ENCODE measurements at regions of chr1 and their contacts with region 1.

Region 1: DNA sequence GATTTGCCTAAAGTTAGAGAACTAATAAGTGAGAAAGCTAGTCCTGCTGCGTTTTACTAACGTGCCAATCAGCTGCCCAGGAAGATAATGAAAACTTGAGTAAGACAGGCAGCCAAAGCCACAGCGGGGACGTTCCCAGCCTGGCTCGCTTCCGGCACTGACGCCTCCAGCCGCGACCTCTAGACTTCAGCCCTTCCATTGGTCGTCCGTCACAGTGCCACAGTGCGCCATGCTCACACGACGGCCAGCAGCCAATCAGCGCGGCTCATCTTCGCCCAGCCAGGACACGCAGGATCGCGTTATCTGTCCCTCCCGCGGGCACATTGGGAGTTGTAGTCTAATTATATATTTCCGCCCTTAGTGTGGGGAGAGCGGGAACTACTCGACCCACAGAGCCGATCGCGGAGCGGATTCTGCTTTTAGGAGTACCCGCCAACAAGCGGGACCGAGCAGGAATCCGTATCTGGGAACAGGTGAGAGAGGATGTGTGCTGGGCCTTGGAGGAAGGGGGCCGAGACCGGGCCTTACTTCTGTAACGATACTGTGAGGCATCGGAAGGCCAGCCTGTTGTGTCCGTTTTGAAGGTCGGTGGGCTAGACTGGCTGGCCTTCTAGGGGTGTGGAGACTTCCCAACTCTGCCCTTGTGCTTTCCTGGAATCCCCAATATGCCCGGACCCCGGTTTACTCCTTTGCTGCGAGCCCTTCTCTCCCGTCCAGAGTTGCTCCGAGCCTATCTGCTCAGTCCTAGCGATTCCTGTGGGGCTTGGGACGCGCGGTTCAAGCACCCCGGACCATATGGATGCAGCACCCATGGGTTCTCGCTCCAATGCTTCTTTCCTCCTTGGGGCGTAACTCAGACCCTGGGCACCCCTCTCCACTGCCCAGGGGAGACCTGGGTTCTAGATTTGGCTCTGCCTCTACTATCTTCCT is at the start of gene FDPS:
- DNase-seq: peak; percentile 99
- ATAC-seq: peak; percentile 99
- H3K4me3 Mint-ChIP-seq: peak within 1 kb of the TSS; percentile 88
- H3K27ac Mint-ChIP-seq: peak within 1 kb of the TSS; percentile 98
- H3K4me1 Mint-ChIP-seq: peaks cover 34% of the 10 kb centered on the region
- H3K27me3 Mint-ChIP-seq: no peaks in the 10 kb centered on the region
- total RNA-seq, gene FDPS: 255 to 354 TPM

Region 2: DNA sequence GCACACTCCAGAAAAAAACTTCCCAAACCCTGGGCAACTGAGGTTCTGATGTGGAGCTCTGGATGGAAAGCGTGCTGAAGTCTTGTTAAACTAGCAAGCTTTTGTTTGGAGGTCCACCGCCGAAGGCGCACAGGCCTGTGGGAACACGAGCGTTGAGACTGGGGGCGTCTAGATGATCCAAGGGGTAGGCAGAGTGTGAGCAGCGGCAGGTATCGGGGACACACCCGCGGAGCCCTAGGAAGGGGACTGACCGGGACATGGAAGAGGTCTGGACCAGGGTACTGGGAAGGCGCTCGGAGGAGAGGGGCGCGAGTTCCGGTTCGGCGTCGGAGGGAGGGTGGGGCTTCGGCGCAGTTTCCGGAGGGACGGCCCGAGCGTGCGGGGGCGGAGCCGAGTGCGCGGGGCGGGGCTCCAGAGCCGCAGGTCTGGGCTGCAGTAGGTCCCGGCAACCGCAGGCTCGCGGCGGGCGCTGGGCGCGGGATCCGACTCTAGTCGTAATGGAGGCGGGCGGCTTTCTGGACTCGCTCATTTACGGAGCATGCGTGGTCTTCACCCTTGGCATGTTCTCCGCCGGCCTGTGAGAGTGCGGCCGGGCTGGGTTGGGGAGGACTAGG is 173.2 kb before region 1 on chr1 and contains the start of gene SLC50A1:
- CTCF ChIA-PET with region 1: no interaction called
- POLR2A ChIA-PET with region 1: no interaction called
- intact Hi-C with region 1: loop called in 1 of 2 experiments (anchors 1 kb)
- DNase-seq: peak; percentile 97
- ATAC-seq: peak; percentile 78
- H3K4me3 Mint-ChIP-seq: peak within 1 kb of the TSS; percentile 96
- H3K27ac Mint-ChIP-seq: peak within 1 kb of the TSS; percentile 97
- H3K4me1 Mint-ChIP-seq: peaks cover 35% of the 10 kb centered on the region
- H3K27me3 Mint-ChIP-seq: no peaks in the 10 kb centered on the region
- total RNA-seq, gene SLC50A1: 50.2 to 58.0 TPM

Region 3: DNA sequence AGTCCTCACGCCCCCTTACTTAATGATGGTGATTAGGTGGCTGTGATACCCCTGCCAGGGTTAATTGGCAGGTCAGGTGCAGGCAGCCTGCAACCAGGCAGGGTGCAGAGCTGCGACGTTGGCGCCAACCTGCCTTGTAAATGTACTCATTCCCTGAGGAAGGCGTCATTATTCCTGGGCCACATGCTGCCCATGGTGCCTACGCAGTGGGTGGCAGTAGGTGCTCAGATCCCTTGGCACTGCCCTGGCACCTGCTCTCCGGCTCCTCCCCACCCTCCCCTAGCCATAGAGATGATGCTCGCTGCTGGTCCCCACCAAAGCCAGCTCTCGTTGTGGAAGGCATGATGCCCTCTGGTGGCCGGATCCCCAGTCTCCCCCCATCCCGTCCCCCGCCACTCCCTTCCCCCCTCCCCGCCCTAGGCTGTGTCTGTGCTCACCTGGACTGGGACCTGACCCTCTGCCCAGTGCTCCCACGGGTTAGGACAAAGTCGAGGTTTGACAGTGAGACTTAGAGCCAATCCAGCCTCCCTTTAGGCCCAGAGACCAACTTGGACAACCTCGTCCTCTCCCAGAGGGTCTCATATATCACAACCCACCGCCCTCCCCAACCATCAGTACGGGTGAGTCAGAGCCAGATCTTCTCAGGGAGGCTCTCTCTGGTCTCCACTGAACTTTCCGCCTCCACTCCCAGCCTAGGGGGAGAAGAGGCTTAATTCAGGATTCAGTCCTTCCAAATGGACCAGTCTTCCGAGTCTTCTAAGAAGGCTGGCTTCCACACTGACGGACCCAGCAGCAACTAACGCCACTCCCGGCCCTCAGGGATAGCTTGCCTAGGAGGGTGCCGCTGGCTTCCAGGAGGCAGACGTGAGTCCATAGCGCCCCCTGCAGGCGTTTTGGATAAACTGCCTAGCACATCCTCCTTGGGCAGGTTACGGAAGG is 141.3 kb before region 1 on chr1:
- CTCF ChIA-PET with region 1: no interaction called
- POLR2A ChIA-PET with region 1: no interaction called
- intact Hi-C with region 1: no loop called
- DNase-seq: peak; percentile 95
- ATAC-seq: peak; percentile 88
- H3K4me3 Mint-ChIP-seq: peak overlapping the region; percentile 21
- H3K27ac Mint-ChIP-seq: peak overlapping the region; percentile 1
- H3K4me1 Mint-ChIP-seq: peaks cover 26% of the 10 kb centered on the region
- H3K27me3 Mint-ChIP-seq: no peaks in the 10 kb centered on the region

Region 4: DNA sequence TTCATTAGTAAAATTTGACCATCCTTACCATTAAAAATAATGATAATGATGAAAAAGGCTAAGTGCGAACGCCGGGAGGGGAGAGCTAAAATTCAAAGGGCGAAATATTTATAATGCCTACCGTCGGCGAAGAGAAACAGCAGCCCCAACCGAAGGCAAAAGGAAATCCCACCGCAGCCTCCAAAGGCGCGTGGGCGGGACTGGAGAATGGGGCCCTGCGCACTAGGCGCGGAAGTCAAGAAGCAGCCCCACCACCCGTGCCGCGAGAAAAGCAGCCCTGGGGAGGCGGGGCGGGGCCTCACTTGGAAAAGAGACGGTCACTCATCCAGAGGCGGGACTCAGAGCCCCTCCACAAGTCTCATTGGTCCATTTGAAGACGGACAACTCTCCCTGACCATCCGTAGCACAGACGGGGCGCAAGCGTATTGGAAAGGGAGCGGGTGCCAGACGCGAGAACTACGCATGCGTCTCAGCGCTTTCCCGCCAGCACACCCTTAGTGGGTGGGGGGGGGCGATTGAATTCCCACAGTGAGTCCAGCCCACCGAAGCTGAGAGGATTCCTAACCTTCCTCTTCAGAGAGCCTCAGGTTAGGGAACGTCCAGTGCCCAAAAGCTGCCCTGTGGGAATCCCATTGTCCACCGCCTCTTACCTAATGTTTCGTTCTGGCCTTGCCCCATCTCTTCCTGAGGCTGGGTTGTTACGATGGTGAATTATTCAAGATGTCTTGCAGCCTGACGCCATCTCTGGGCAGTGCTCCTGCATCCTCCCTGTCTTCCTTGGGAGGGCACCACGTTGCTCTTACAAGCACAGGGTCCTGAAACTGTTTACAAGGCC is 81.3 kb before region 1 on chr1:
- CTCF ChIA-PET with region 1: interaction called, 4 read pairs
- POLR2A ChIA-PET with region 1: no interaction called
- intact Hi-C with region 1: loop called in 1 of 2 experiments (anchors 1 kb)
- DNase-seq: peak; percentile 99
- ATAC-seq: peak; percentile 98
- H3K4me3 Mint-ChIP-seq: peak overlapping the region; percentile 96
- H3K27ac Mint-ChIP-seq: peak overlapping the region; percentile 97
- H3K4me1 Mint-ChIP-seq: peaks cover 27% of the 10 kb centered on the region
- H3K27me3 Mint-ChIP-seq: no peaks in the 10 kb centered on the region

Region 5: DNA sequence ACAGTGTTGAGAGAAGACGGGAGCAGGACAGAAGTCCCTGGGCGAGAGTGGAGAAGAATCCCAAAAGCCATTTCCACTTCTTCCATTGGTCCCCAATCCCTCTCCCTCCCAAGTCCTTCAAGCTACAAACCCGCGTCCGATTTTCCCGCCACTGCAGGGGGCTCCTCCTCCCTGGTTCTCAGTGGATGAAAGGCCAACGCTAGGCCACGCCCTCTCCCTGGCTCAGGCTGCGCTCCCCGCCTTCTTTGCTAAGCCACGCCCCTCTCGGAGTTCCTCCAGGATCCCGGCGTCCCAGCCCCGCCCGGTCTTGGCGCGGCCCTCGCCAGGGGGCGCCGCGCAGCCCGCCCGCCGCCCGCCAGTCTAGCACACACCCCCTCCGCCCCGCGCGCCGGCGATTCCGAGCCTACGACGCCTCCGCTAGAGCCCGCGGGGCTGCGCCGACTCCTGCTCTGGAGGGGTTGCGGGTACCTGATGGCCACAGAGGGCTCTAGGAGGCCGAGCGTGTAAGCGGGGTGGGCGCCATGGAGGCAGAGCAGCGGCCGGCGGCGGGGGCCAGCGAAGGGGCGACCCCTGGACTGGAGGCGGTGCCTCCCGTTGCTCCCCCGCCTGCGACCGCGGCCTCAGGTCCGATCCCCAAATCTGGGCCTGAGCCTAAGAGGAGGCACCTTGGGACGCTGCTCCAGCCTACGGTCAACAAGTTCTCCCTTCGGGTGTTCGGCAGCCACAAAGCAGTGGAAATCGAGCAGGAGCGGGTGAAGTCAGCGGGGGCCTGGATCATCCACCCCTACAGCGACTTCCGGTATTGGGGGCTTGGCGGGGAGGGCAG is 31.5 kb before region 1 on chr1 and contains the start of gene HCN3:
- CTCF ChIA-PET with region 1: interaction called, 8 read pairs
- POLR2A ChIA-PET with region 1: interaction called, 7 read pairs
- intact Hi-C with region 1: loop called (anchors 1 to 2 kb)
- DNase-seq: peak; percentile 97
- ATAC-seq: peak; percentile 68
- H3K4me3 Mint-ChIP-seq: peak within 1 kb of the TSS; percentile 63
- H3K27ac Mint-ChIP-seq: no peak within 1 kb of the TSS
- H3K4me1 Mint-ChIP-seq: peaks cover 31% of the 10 kb centered on the region
- H3K27me3 Mint-ChIP-seq: no peaks in the 10 kb centered on the region
- total RNA-seq, gene HCN3: 1.9 to 2.3 TPM

Region 6: GRCh38 chr1:155342842-155343241 is 34.1 kb after region 1 on chr1:
- CTCF ChIA-PET with region 1: no interaction called
- POLR2A ChIA-PET with region 1: no interaction called
- intact Hi-C with region 1: no loop called
- DNase-seq: no peak
- ATAC-seq: no peak
- H3K4me3 Mint-ChIP-seq: no peak overlapping the region
- H3K27ac Mint-ChIP-seq: no peak overlapping the region
- H3K4me1 Mint-ChIP-seq: peaks cover 4% of the 10 kb centered on the region
- H3K27me3 Mint-ChIP-seq: no peaks in the 10 kb centered on the region

Region 7: GRCh38 chr1:155688324-155689080 is 379.7 kb after region 1 on chr1 and contains the start of gene YY1AP1:
- CTCF ChIA-PET with region 1: no interaction called
- POLR2A ChIA-PET with region 1: no interaction called
- intact Hi-C with region 1: loop called in 1 of 2 experiments (anchors 5 kb)
- DNase-seq: peak; percentile 95
- ATAC-seq: peak; percentile 86
- H3K4me3 Mint-ChIP-seq: peak within 1 kb of the TSS; percentile 97
- H3K27ac Mint-ChIP-seq: peak within 1 kb of the TSS; percentile 94
- H3K4me1 Mint-ChIP-seq: peaks cover 29% of the 10 kb centered on the region
- H3K27me3 Mint-ChIP-seq: no peaks in the 10 kb centered on the region
- total RNA-seq, gene YY1AP1: 59.6 to 76.0 TPM